ENCODE measurements at regions of chr5 and their contacts with region 1.

Region 1: GRCh38 chr5:137220523-137220927 is 278.6 kb downstream of the SPOCK1 start:
- DNase-seq: no peak
- ATAC-seq: peak; percentile 55

Region 2: DNA sequence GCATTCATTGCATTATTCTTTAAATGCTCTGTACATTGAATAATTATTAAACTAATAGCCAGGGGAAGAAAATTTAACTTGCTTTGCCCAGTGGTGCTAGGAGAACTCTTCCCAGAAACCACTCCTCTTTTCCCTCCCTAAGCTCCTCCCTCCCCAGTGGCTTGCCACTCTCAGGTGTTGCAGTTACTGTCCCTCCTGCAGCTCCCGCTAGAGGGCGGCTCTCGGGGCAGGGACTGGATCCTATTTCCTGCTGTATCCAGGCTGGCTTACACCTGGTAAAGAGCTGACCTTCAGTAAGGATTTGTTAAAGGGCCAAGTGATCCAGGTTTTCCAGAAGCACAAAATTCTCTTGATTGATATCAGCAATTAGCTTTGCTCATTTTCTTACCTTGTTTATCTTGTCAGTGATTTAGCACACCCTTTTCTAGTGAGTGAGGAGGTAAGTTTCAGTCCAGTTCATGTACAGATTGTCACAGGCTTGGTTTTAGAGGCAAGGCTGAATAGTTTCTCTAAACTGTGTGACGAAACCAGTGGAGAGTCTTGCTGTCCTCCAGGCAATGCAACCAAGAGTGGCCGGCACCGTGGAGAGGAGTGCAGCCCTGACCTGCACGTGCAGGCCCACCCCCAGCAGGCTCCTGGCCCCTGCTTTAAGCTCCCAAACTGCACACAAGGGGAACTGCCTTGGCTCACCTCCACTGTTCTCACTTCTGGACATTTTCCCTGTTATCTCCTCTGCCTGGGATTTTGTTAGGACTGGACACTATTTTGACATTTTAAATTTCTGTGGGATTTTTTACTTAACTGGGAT is 145.2 kb before region 1 on chr5:
- intact Hi-C with region 1: loop called (anchors 10 kb)
- DNase-seq: no peak
- ATAC-seq: peak; percentile 58

Region 3: DNA sequence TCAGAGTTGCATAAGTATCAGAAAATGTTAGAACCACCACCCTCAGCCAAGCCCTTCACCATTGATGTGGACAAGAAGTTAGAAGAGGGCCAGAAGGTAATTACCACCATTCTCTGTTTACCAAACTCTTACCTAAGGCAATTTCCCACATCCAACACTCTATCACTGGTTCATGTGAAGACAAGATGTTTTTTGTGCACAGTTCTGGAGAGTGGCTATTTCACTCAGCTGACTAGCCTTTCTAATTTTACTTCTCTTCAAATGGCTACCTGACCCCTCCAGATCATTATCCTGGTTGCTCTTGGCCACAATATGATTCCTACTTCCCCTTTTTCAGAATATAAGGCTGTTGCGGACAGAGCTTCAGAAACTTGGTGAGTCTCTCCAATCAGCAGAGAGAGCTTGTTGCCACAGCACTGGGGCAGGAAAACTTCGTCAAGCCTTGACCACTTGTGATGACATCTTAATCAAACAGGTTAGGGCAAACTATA is 965.5 kb after region 1 on chr5:
- intact Hi-C with region 1: no loop called
- DNase-seq: no peak
- ATAC-seq: no peak

Measured in Right ventricle myocardium inferior (tissue), 1 donor.